PC-9 (cell line): ENCODE measurements at regions of chr2 and their contacts with region 1.

Region 1: GRCh38 chr2:70412294-70413070 is 110.6 kb upstream of the FAM136A start:
- DNase-seq: no peak
- H3K4me3 ChIP-seq: no peak overlapping the region
- H3K27ac ChIP-seq: no peak overlapping the region
- H3K4me1 ChIP-seq: peaks cover 10% of the 10 kb centered on the region
- H3K27me3 ChIP-seq: no peaks in the 10 kb centered on the region
- CTCF ChIP-seq: no peak

Region 2: GRCh38 chr2:70328921-70329561 is 83.4 kb before region 1 on chr2:
- CTCF ChIA-PET with region 1: no interaction called
- POLR2A ChIA-PET with region 1: no interaction called
- intact Hi-C with region 1: no loop called
- DNase-seq: peak; percentile 93 to 97
- H3K4me3 ChIP-seq: peak overlapping the region; percentile 8; the same call in 1 of the 2 replicates
- H3K27ac ChIP-seq: peak overlapping the region; percentile 81
- H3K4me1 ChIP-seq: peaks cover 29% of the 10 kb centered on the region
- H3K27me3 ChIP-seq: no peaks in the 10 kb centered on the region
- CTCF ChIP-seq: no peak

Region 3: GRCh38 chr2:70367722-70368323 is 44.7 kb before region 1 on chr2:
- CTCF ChIA-PET with region 1: no interaction called
- POLR2A ChIA-PET with region 1: no interaction called
- intact Hi-C with region 1: no loop called
- DNase-seq: peak in 1 of 2 experiments; percentile 56
- H3K4me3 ChIP-seq: no peak overlapping the region
- H3K27ac ChIP-seq: no peak overlapping the region
- H3K4me1 ChIP-seq: peaks cover 19% of the 10 kb centered on the region
- H3K27me3 ChIP-seq: no peaks in the 10 kb centered on the region
- CTCF ChIP-seq: no peak

Region 4: GRCh38 chr2:70388128-70388527 is 24.4 kb before region 1 on chr2:
- CTCF ChIA-PET with region 1: no interaction called
- POLR2A ChIA-PET with region 1: interaction called, 14 read pairs
- intact Hi-C with region 1: no loop called
- DNase-seq: peak; percentile 35 to 87
- H3K4me3 ChIP-seq: no peak overlapping the region
- H3K27ac ChIP-seq: peak overlapping the region; percentile 83
- H3K4me1 ChIP-seq: peaks cover 32% of the 10 kb centered on the region
- H3K27me3 ChIP-seq: no peaks in the 10 kb centered on the region
- CTCF ChIP-seq: no peak